Activated CD4-positive, alpha-beta memory T cell treated with anti-CD3 and anti-CD28 coated beads, Interleukin-2, amount 10 ng/mL, durations not matched to agents 7 days and 5 days (primary cell): ENCODE measurements at regions of chr1 and their contacts with region 1.

Region 1: GRCh38 chr1:67430352-67431155 is at the start of gene SERBP1:
- DNase-seq: peak; percentile 97
- H3K4me3 Mint-ChIP-seq: peak within 1 kb of the TSS; percentile 81
- H3K27ac Mint-ChIP-seq: peak within 1 kb of the TSS; percentile 87
- H3K4me1 Mint-ChIP-seq: peaks cover 40% of the 10 kb centered on the region
- H3K27me3 Mint-ChIP-seq: no peaks in the 10 kb centered on the region
- total RNA-seq, gene SERBP1: 213 to 219 TPM

Region 2: DNA sequence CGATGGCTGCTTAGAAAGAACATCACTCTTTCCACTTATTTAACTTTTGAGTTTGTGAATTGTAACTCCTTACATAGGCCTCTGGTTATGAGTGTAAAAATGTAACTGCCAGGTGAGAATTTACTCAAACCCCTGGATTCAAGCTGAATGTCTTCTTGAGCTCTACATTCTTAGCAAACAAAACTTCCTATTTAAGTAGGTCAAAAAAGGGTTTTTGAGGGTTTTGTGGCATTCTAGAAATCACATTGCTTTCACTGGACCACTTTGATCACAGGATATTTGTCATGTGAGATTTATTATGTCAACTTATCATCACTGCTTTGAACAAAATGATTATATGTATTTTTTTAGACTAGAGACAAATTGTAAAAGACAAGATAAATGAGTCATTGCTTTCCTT is 258.6 kb before region 1 on chr1:
- CTCF ChIA-PET with region 1: no interaction called
- POLR2A ChIA-PET with region 1: interaction called, 10 read pairs
- DNase-seq: no peak
- H3K4me3 Mint-ChIP-seq: peak overlapping the region; percentile 55
- H3K27ac Mint-ChIP-seq: peak overlapping the region; percentile 82
- H3K4me1 Mint-ChIP-seq: peaks cover 68% of the 10 kb centered on the region
- H3K27me3 Mint-ChIP-seq: peaks cover 1% of the 10 kb centered on the region

Region 3: DNA sequence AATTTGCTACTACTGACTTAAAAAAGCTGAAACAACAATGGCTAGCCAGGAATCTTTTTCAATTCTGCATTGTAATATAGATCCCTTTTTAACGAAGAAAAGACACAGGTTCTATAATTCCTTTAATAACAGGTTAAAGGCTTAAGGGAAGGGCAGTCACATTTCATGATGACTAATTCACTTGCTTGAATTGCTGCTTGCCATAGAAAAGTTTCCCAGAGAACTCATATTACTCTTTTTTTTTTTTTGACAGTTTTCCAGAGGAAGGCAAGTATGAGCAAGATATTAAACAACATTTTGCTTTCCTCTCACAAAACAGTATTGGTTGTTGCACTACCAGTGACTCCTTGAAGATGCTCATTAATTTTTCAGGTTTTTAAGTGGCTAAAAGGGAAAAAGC is 203.4 kb before region 1 on chr1:
- CTCF ChIA-PET with region 1: no interaction called
- POLR2A ChIA-PET with region 1: no interaction called
- DNase-seq: no peak
- H3K4me3 Mint-ChIP-seq: no peak overlapping the region
- H3K27ac Mint-ChIP-seq: no peak overlapping the region
- H3K4me1 Mint-ChIP-seq: peaks cover 7% of the 10 kb centered on the region
- H3K27me3 Mint-ChIP-seq: no peaks in the 10 kb centered on the region

Region 4: GRCh38 chr1:67314696-67315095 is 115.9 kb before region 1 on chr1:
- CTCF ChIA-PET with region 1: interaction called, 3 read pairs
- POLR2A ChIA-PET with region 1: interaction called, 19 read pairs
- DNase-seq: no peak
- H3K4me3 Mint-ChIP-seq: peak overlapping the region; percentile 47
- H3K27ac Mint-ChIP-seq: peak overlapping the region; percentile 87
- H3K4me1 Mint-ChIP-seq: peaks cover 53% of the 10 kb centered on the region
- H3K27me3 Mint-ChIP-seq: no peaks in the 10 kb centered on the region

Region 5: DNA sequence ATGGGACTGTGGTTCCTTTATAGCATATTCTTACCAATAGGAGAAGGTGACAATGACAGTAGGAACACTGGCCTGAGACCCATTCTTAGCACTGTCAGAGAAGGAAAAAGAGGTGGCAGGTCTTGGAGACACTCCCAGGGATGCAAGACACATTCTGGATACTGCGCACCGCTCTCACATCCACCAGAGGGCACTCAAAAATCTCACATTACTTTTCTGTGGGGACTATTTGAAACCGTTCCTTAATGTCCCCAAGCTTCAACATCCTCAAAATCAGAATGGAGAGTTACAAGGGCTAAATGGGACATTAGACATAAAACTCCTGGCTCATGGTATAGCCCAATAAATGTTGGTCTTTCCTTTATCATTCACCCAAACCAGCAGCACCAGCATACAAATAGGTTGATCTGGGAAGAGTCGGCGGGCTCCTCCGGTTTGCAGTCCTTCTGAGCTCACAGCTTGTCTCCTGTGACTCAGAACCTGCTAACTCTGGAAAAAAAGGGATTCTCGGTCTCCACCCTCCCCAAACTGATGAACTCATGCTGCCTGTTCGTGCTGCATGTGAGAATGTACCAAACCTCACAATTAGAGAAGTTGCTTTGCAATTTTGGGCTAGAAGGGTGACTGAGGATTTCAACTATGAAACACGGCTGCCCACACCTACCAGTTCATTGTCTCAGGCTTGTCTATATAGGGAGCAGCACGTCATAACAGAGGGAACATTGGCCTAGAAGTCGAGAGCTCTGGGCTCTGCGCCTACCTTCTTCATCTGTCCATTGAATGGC is 82.7 kb before region 1 on chr1:
- CTCF ChIA-PET with region 1: no interaction called
- POLR2A ChIA-PET with region 1: interaction called, 11 read pairs
- DNase-seq: no peak
- H3K4me3 Mint-ChIP-seq: no peak overlapping the region
- H3K27ac Mint-ChIP-seq: no peak overlapping the region
- H3K4me1 Mint-ChIP-seq: peaks cover 31% of the 10 kb centered on the region
- H3K27me3 Mint-ChIP-seq: no peaks in the 10 kb centered on the region

Region 6: DNA sequence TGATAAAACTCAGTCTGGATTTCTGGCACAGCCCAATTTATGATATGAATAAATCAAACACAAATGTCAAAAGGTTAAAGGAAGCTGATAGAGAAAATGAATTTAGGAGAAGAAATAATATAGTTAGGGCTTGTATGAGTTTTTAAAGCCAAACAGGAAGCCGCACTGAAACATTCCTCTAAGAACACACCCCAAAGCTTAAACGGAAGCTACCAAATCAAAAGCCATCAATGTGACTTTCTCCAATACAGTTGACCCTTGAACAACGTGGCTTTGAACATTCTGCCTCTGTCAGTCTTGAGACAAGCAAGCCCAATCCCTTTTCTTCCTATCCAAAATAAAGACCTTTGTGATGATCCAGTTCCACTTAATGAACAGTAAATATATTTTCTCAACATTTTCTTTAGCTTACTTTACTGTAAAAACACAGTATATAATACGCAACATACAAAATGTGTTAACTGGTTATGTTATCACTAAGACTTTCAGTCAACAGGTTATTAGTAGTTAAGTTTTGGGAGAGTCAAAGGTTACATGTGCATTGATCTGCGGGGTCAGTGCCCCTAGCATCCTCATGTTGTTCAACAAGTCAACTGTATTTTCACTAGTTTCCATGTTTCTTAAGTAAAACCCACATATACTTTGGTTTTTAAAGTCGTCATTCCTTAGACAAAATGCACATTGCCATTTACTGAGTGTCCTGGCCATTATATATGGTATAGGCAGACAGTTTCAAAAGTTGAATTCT is 11.5 kb before region 1 on chr1:
- CTCF ChIA-PET with region 1: interaction called, 7 read pairs
- POLR2A ChIA-PET with region 1: interaction called, 35 read pairs
- DNase-seq: no peak
- H3K4me3 Mint-ChIP-seq: no peak overlapping the region
- H3K27ac Mint-ChIP-seq: peak overlapping the region; percentile 52
- H3K4me1 Mint-ChIP-seq: peaks cover 68% of the 10 kb centered on the region
- H3K27me3 Mint-ChIP-seq: no peaks in the 10 kb centered on the region

Region 7: DNA sequence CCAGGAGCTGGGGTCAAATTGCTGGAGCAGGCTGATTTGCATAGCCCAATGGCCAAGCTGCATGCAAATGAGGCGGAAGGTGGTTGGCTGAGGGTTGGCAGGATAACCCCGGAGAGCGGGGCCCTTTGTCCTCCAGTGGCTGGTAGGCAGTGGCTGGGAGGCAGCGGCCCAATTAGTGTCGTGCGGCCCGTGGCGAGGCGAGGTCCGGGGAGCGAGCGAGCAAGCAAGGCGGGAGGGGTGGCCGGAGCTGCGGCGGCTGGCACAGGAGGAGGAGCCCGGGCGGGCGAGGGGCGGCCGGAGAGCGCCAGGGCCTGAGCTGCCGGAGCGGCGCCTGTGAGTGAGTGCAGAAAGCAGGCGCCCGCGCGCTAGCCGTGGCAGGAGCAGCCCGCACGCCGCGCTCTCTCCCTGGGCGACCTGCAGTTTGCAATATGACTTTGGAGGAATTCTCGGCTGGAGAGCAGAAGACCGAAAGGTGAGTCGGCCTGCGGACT is 254.6 kb after region 1 on chr1 and contains the start of gene GADD45A:
- CTCF ChIA-PET with region 1: no interaction called
- POLR2A ChIA-PET with region 1: interaction called, 19 read pairs
- DNase-seq: peak; percentile 97
- H3K4me3 Mint-ChIP-seq: peak within 1 kb of the TSS; percentile 99
- H3K27ac Mint-ChIP-seq: peak within 1 kb of the TSS; percentile 98
- H3K4me1 Mint-ChIP-seq: peaks cover 46% of the 10 kb centered on the region
- H3K27me3 Mint-ChIP-seq: no peaks in the 10 kb centered on the region
- total RNA-seq, gene GADD45A: 29.5 to 30.7 TPM